Posterior cingulate gyrus (tissue), 11 donors: ENCODE measurements at regions of chr6 and their contacts with region 1.

Region 1: DNA sequence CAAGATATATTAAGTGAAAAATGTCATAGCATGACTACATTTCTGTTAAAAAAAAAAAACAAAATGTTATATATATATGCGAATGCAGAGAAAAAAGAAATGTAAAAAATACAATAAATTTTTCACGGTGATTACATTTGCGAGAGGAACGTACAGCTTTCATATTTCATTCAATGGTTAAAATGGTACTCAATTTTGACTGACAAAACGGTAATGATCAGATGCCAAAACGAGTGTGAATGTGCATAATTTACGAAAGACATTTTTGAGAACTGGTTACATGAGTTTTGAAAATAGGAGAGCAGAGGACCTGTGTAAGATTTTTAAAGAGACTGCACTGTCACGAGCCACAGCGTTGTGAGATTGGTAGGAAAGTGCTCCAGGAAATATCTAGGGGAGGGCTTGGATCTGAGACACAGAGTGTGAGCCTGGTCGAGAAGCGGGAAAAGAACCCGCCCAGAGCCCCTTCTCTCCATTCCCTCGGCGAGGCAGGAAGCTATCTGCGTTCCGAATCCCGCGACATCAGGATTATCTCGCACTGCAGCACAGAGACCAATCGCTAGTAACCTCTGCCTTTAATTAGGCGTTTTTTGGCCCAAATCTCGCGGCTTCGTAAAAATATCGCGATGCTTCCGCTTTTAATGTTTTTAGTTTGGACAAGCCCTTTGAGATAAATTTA is 28.5 kb downstream of the TRIM27 start:
- DNase-seq: peak; percentile 66 to 98 (median 86)

Region 2: DNA sequence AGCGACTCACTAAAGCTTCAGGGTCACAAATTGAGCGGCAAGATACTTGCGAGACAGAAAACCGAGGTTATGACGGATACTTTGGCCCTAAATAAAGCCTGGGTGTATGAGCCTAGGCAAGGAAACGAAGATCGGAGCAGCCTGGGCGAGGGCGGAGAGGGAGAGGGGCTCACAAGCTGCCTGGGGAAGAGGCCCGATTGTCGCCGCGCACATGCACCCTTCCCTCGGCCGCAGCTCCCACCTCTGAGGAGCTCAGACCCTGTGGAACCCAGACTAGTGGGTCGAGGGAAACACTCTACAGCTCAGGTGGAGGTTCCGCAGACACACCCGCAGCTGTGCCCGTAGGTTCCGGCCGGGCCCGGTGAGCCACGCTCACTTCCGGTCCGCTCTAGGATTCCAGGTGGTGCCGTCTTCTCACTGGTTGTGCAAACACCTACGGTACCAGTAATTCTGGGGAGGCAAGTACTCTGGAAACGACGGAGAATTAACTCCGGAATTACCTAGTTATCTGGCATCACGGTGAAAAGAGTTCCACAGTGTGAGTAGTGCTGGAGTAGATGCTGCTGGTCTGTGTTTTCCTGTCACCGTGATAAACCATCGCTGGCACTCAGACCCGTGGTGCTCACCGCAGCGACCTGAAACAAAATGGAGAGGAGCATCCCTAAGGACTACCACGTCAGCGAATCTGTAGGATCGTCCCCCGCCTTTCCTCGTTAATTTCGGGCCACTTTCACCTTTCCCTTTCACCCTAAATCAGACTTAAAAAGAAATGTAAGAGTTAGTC is 308.1 kb before region 1 on chr6:
- intact Hi-C with region 1: no loop called
- DNase-seq: peak; percentile 40 to 97 (median 80)

Region 3: GRCh38 chr6:28597217-28598005 is 297.9 kb before region 1 on chr6:
- intact Hi-C with region 1: no loop called
- DNase-seq: peak in 4 of 10 donors; percentile 24 to 84 (median 78)

Region 4: DNA sequence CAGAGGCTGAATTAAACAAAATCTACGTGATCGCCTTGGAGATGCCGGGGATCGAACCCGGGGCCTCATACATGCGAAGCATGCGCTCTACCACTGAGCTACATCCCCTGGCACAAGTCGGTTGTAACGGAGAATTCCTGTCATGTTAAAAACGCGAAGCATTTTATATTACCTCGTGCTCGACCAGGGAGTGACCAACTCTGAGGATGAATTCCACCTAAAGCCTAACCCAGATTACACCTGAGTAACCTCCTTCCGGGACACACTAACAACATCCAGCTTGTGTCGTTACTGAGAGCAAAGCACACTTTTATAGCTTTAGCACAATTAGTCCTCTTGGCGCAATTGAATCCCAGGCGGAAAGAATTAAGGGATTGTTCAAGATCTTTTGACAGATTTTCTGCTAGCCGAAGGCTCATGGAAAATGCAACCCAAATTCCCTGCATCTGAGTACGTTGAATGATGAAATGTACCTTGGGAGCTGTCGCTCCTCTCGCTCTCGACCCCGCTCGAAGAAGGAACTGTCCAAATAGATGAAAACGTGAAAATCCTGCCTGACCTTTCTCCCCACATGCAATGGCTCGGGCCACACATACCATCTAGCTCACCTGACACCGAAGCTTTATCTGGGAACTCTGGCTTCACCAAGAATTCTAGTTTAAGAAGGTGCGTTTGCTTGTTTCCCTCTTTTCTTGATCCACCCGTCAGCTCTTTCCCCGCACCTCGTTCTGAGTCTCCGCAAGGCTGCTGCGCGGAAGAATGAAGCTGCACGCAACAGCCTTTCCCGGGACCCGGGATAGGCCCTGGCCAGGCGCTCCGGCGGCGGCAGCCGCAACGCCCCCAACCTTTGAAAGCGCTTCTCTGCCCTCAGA is 221.2 kb before region 1 on chr6:
- intact Hi-C with region 1: no loop called
- DNase-seq: peak in 9 of 10 donors; percentile 29 to 93 (median 58)

Region 5: GRCh38 chr6:28838634-28839442 is 56.4 kb before region 1 on chr6:
- intact Hi-C with region 1: loop called (anchors 5 kb)
- DNase-seq: peak; percentile 71 to 97 (median 82)

Region 6: DNA sequence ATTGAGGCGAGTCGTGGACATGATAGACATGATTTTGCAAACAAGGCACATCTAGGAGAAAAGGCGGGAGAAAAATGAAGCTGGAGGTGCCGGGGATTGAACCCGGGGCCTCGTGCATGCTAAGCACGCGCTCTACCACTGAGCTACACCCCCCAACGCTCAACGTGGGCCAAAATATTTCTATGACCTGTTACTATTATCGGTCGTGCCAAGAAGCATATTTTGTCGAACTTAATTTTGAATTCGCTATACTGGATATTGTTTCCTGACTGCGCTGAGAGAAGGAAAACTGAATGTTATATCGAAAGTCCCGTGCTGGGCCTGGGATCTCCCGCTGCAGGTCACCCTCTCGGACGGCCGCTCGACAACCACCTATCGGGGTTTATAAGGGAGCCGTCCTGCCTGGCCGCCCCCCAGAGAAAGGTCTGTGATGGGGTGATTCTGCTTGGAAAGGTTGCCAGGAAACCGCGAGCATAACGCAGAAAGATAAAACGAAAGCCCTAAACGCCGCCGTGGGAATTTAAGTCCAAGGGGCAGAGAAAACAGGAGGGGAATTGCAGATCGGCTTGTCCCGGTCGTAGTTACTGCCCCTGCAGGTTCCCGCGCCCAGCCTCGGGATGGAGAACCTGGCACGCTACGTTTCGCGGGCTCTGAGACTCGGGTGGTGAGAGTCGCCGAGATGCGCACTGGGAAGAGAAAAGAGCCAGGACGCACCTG is 31.5 kb before region 1 on chr6:
- intact Hi-C with region 1: loop called (anchors 5 kb)
- DNase-seq: peak; percentile 63 to 96 (median 80)

Region 7: GRCh38 chr6:28880894-28881780 is 14.1 kb before region 1 on chr6:
- intact Hi-C with region 1: loop called (anchors 1 kb)
- DNase-seq: peak in 9 of 10 donors; percentile 39 to 94 (median 75)

Region 8: DNA sequence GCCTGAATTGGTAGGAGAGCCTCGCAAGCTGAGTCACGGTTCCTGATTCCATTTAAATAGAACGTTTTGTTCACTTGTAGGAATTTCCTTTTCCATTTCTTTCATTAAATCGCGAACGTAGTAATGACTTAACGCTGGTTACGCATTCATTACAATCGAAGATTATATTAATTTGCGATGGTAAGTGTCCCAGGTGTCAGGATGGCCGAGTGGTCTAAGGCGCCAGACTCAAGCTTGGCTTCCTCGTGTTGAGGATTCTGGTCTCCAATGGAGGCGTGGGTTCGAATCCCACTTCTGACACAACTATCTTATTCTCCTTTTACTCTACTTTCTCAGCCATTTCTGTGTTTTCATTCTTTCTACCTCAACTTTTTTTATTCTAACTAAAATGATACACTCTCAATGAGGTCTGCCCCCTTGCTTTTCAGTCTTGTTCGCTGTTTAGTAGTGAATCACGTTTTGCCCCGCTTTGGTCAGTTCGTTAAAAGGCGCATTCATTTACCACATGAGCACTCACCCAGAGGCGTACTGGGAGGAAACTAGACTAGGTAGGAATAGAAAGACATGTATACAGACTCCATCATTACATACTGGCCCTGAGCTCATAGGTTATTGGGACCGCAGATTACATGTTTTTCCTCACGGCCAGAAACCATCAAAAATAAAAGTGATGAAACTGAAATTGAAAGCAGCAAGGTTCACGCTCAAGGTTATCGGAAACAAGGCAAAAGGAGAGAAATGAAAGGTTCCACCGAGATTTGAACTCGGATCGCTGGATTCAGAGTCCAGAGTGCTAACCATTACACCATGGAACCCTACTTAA is 45.8 kb after region 1 on chr6:
- intact Hi-C with region 1: loop called (anchors 1 kb)
- DNase-seq: peak in 8 of 10 donors; percentile 47 to 91 (median 67)